Mammary epithelial cell (primary cell): ENCODE measurements at regions of chr20 and their contacts with region 1.

Region 1: DNA sequence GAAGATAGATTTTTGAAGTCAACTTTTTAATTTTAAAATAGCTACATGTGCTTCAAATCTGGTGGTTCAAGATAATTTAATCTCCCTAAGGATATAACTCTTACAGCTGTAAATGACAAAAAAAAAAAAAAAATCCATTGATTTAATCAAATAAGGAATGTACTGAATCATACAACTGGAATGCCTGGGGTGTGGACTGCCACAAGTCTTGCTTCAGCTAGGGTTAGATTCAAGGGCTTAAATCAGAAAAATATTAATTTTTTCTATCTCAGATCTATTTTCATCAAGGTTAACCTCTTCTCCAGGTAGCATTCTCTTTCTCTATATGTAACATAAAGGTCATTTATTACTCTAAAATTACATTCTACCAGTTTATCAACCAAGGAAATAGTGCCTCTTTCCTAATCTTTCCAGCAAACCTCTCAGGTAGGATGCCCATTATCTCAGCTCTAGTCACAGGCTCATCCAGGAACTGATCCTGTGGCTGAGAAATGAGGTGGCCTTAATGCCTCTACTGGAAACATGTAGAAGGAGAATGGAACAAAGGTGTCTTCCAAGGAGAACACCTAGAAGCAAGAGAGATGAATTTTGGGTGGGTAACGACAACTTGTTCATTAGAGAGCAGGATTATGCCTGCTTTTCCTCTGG is 466.9 kb downstream of the CBLN4 start:
- DNase-seq: peak; percentile 46
- H3K4me3 ChIP-seq: peak overlapping the region in 1 of 3 experiments; percentile 3
- H3K27ac ChIP-seq: peak overlapping the region; percentile 78
- H3K4me1 ChIP-seq: peaks cover 37% of the 10 kb centered on the region
- H3K27me3 ChIP-seq: no peaks in the 10 kb centered on the region
- CTCF ChIP-seq: no peak

Region 2: GRCh38 chr20:55515832-55516231 is 22.6 kb before region 1 on chr20:
- CTCF ChIA-PET with region 1: no interaction called
- dilution Hi-C with region 1: no loop called
- in situ Hi-C with region 1: no loop called
- intact Hi-C with region 1: loop called (anchors 2 kb)
- DNase-seq: peak; percentile 70
- H3K4me3 ChIP-seq: no peak overlapping the region
- H3K27ac ChIP-seq: no peak overlapping the region
- H3K4me1 ChIP-seq: peaks cover 28% of the 10 kb centered on the region
- H3K27me3 ChIP-seq: no peaks in the 10 kb centered on the region
- CTCF ChIP-seq: no peak

Region 3: DNA sequence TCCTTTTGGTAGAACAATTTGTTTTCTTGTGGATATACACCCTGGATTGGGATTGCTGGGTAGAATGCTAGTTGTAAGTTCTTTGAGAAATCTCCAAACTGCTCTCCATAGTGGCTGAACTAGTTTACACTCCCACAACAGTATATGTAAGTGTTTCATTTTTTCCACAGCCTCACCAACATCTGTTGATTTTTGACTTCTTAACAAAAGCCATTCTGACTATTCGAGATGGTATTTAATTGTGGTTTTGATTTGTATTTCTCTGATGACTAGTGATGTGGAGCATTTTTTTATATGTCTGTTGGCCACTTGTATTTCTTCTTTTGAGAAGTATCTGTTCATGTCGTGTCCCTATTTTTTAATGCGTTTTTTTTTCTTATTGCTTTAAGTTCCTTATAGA is 22.9 kb after region 1 on chr20:
- CTCF ChIA-PET with region 1: no interaction called
- dilution Hi-C with region 1: no loop called
- in situ Hi-C with region 1: no loop called
- intact Hi-C with region 1: loop called (anchors 1 kb)
- DNase-seq: peak; percentile 79
- H3K4me3 ChIP-seq: no peak overlapping the region
- H3K27ac ChIP-seq: no peak overlapping the region
- H3K4me1 ChIP-seq: peaks cover 4% of the 10 kb centered on the region
- H3K27me3 ChIP-seq: no peaks in the 10 kb centered on the region
- CTCF ChIP-seq: no peak

Region 4: DNA sequence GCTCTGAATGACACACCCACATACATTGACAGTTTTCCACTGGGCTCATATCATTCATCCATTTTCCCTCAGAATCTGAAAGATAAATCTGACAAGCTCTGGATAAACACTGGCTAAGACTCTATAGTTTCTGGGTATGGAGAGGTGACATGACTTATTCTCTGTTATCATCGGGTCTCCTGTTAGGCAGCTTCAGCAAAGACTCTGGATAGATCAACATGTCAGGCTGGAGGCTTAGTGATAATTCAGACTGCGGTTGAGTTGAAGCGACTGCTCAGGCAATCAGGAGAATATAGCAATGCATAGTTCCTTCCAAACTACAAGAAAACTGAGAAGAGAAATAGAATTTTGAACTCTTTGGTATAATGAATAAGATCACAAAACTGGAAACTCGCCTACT is 72.4 kb after region 1 on chr20:
- CTCF ChIA-PET with region 1: no interaction called
- dilution Hi-C with region 1: no loop called
- in situ Hi-C with region 1: no loop called
- intact Hi-C with region 1: no loop called
- DNase-seq: no peak
- H3K4me3 ChIP-seq: no peak overlapping the region
- H3K27ac ChIP-seq: no peak overlapping the region
- H3K4me1 ChIP-seq: no peaks in the 10 kb centered on the region
- H3K27me3 ChIP-seq: no peaks in the 10 kb centered on the region
- CTCF ChIP-seq: no peak

Region 5: GRCh38 chr20:55632592-55632991 is 94.2 kb after region 1 on chr20:
- CTCF ChIA-PET with region 1: no interaction called
- dilution Hi-C with region 1: loop called (anchors 5 kb)
- in situ Hi-C with region 1: no loop called
- intact Hi-C with region 1: no loop called
- DNase-seq: no peak
- H3K4me3 ChIP-seq: no peak overlapping the region
- H3K27ac ChIP-seq: no peak overlapping the region
- H3K4me1 ChIP-seq: no peaks in the 10 kb centered on the region
- H3K27me3 ChIP-seq: no peaks in the 10 kb centered on the region
- CTCF ChIP-seq: peak in 1 of 2 donors; percentile 16